ENCODE measurements at regions of chr4 and their contacts with region 1.

Region 1: GRCh38 chr4:184825896-184826690 is at the start of gene ACSL1:
- DNase-seq: peak; percentile 72
- H3K4me3 Mint-ChIP-seq: peak within 1 kb of the TSS; percentile 94
- H3K27ac Mint-ChIP-seq: peak within 1 kb of the TSS; percentile 90
- H3K4me1 Mint-ChIP-seq: peaks cover 39% of the 10 kb centered on the region
- H3K27me3 Mint-ChIP-seq: peaks cover 19% of the 10 kb centered on the region
- total RNA-seq, gene ACSL1: 42.7 and 43.0 TPM in 2 replicates

Region 2: GRCh38 chr4:184417802-184418511 is 408.1 kb before region 1 on chr4:
- intact Hi-C with region 1: loop called (anchors 5 kb)
- DNase-seq: no peak
- H3K4me3 Mint-ChIP-seq: peak overlapping the region; percentile 48
- H3K27ac Mint-ChIP-seq: peak overlapping the region; percentile 91
- H3K4me1 Mint-ChIP-seq: peaks cover 73% of the 10 kb centered on the region
- H3K27me3 Mint-ChIP-seq: no peaks in the 10 kb centered on the region

Region 3: GRCh38 chr4:184649026-184649970 is 176.8 kb before region 1 on chr4 and contains the starts of genes CASP3 and PRIMPOL:
- intact Hi-C with region 1: loop called (anchors 5 kb)
- DNase-seq: peak; percentile 96
- H3K4me3 Mint-ChIP-seq: peak within 1 kb of the TSS; percentile 95
- H3K27ac Mint-ChIP-seq: peak within 1 kb of the TSS; percentile 88
- H3K4me1 Mint-ChIP-seq: peaks cover 52% of the 10 kb centered on the region
- H3K27me3 Mint-ChIP-seq: no peaks in the 10 kb centered on the region
- total RNA-seq, gene CASP3: 90.9 and 94.1 TPM in 2 replicates
- total RNA-seq, gene PRIMPOL: 16.2 and 17.6 TPM in 2 replicates

Region 4: GRCh38 chr4:184762100-184762499 is 64.0 kb before region 1 on chr4:
- intact Hi-C with region 1: loop called (anchors 1 kb)
- DNase-seq: peak; percentile 61
- H3K4me3 Mint-ChIP-seq: peak overlapping the region; percentile 1
- H3K27ac Mint-ChIP-seq: peak overlapping the region; percentile 75
- H3K4me1 Mint-ChIP-seq: peaks cover 19% of the 10 kb centered on the region
- H3K27me3 Mint-ChIP-seq: no peaks in the 10 kb centered on the region

Region 5: DNA sequence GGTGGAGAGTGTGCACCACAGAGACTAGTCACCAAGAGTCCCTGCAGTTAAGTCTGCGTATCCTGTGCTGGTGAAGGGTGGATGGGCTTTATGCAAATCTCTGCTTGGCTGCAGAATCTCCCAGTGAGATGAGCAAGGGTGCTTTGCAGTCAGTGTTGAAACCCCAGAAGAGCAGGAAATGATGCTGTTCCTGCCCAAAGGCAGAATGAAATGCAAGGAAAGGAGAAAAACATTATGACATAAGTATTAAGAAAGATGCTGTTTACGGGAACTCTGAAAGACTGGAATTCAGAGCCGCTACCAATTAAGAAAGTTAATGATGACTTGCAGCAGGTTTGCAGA is 25.1 kb after region 1 on chr4:
- intact Hi-C with region 1: loop called (anchors 2 kb)
- DNase-seq: no peak
- H3K4me3 Mint-ChIP-seq: no peak overlapping the region
- H3K27ac Mint-ChIP-seq: no peak overlapping the region
- H3K4me1 Mint-ChIP-seq: peaks cover 36% of the 10 kb centered on the region
- H3K27me3 Mint-ChIP-seq: peaks cover 2% of the 10 kb centered on the region

Region 6: DNA sequence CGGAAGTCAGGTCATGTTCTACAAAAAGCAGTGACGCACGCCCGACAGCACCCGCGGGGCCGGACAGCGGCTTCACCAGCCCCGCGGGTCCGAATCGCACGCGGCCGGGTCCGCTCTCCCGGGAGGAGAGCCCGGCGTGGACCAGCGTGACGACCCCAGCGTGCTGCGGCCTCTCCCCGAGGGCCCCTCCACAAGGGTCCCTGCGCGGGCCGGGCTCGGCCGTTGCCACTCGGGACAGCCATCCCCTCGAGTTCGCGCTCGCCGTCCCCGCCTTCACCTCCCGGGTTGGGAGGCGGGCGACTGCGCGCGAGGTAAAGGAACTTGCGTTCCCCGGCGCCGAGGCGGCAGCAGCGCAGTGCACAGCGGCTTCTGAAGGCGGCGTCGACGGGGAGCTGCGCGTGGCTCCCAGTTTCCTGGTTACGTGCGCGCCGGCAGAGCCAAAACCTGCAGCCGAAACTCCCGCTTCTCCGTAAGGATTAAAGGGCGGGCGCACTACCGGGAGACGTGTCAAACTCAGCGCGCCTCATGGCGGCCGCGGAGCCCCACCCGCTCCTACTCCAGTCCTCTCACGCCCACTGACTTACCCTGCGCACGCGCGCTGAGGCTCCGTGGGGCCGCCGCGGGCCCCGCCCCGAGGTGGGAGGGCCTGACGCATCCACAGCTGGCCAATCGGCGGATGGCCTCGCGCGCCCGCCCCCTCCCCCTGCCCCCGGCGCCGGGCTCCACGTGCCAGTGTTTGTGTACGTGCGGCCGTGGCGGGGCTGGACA is 570.0 kb after region 1 on chr4:
- intact Hi-C with region 1: loop called (anchors 10 kb)
- DNase-seq: peak; percentile 97
- H3K4me3 Mint-ChIP-seq: peak overlapping the region; percentile 87
- H3K27ac Mint-ChIP-seq: peak overlapping the region; percentile 92
- H3K4me1 Mint-ChIP-seq: peaks cover 48% of the 10 kb centered on the region
- H3K27me3 Mint-ChIP-seq: no peaks in the 10 kb centered on the region